Sciatic nerve (tissue), 2 donors: ENCODE measurements at regions of chr19 and their contacts with region 1.

Region 1: GRCh38 chr19:45663800-45664199 is 4.2 kb upstream of the GIPR start:
- DNase-seq: no peak
- ATAC-seq: no peak

Region 2: GRCh38 chr19:45681391-45682015 is 17.7 kb after region 1 on chr19:
- intact Hi-C with region 1: no loop called
- DNase-seq: peak; percentile 86
- ATAC-seq: peak; percentile 85

Region 3: GRCh38 chr19:47370045-47370611 is 1706.3 kb after region 1 on chr19:
- intact Hi-C with region 1: loop called (anchors 5 kb)
- DNase-seq: no peak
- ATAC-seq: peak; percentile 10